ENCODE measurements at regions of chr15 and their contacts with region 1.

Region 1: GRCh38 chr15:84871428-84872305 is 12.8 kb upstream of the SLC28A1 start:
- DNase-seq: no peak

Region 2: GRCh38 chr15:84588053-84588874 is 283.4 kb before region 1 on chr15:
- intact Hi-C with region 1: loop called (anchors 10 kb)
- DNase-seq: peak; percentile 57 to 93 (median 84)